GM12878 (cell line): ENCODE measurements at regions of chr7 and their contacts with region 1.

Region 1: DNA sequence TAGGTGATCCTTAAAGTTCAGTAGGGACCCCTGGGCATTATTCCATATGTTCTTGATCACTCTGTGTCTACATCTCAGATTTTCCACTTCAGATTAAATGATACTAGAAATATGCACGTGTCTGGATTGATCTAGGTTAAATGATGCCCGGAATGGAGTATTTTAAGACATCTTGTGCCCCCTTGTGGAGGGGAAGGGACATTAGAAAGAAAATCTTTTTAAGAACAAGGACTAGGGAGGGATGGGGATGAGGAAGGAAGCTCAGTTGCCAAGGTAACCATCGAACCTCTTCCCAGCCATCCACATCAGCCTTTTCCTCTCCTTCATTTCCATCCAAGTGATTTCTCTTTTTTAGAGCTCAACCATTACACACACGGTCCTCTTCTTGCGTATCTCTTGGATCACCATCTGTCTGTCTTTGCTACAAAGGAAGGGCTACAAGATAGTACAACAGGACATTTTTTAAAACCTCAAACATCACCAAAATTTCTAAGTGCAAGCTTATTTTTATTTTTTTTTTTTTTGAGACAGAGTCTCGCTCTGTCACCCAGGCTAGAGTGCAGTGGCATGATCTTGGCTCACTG is 40.5 kb downstream of the PRSS2 start:
- DNase-seq: no peak
- ATAC-seq: peak; percentile 1; the same call in 2 of the 3 replicates
- H3K4me3 ChIP-seq: no peak overlapping the region
- H3K27ac ChIP-seq: peak overlapping the region; percentile 24; the same call in 1 of the 2 replicates
- H3K4me1 ChIP-seq: peaks cover 46% of the 10 kb centered on the region
- H3K27me3 ChIP-seq: no peaks in the 10 kb centered on the region
- CTCF ChIP-seq: peak; percentile 55 to 73 (median 65)
- EP300 ChIP-seq: no peak
- POLR2A ChIP-seq: no peak
- RAD21 ChIP-seq: peak; percentile 94

Region 2: DNA sequence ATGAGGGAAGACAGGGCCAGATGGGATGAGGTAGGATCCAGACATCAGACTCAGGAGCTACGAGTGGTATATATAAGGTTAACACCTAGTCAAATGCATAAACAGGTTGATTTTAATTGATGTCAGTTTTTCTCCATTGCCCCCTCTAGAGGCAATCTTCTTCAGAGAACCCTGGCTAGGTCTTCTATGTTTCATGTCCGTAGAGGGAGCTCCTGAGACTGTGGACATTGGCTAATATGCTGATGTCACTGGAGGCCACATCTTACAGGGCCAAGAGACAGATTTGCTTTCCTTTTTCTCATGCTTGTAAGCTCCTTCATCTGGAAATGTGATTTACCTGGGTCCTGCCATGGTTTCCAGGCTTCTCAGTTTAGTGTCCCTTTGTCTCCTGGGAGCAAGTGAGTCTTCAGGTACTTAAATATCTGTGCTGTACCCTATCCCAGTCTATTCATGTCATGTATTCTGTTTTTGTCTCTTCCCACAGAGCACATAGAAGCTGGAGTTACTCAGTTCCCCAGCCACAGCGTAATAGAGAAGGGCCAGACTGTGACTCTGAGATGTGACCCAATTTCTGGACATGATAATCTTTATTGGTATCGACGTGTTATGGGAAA is 223.6 kb before region 1 on chr7:
- CTCF ChIA-PET with region 1: interaction called, 15 read pairs
- POLR2A ChIA-PET with region 1: no interaction called
- RAD21 ChIA-PET with region 1: interaction called, 11 read pairs
- SMC1A ChIA-PET with region 1: interaction called, 5 read pairs
- in situ Hi-C with region 1: no loop called
- intact Hi-C with region 1: no loop called
- DNase-seq: peak; percentile 15
- ATAC-seq: peak; percentile 88
- H3K4me3 ChIP-seq: no peak overlapping the region
- H3K27ac ChIP-seq: no peak overlapping the region
- H3K4me1 ChIP-seq: 0 out of 2 replicates have a peak, but pooled peaks cover 4% of the 10 kb centered on the region
- H3K27me3 ChIP-seq: no peaks in the 10 kb centered on the region
- CTCF ChIP-seq: peak; percentile 75 to 93 (median 75); a peak in 5 of 6 replicates
- EP300 ChIP-seq: no peak
- POLR2A ChIP-seq: no peak
- RAD21 ChIP-seq: peak; percentile 48

Region 3: GRCh38 chr7:142632291-142633134 is 178.7 kb before region 1 on chr7:
- CTCF ChIA-PET with region 1: interaction called, 185 read pairs
- POLR2A ChIA-PET with region 1: no interaction called
- RAD21 ChIA-PET with region 1: interaction called, 75 read pairs
- SMC1A ChIA-PET with region 1: interaction called, 68 read pairs
- in situ Hi-C with region 1: loop called (anchors 5 kb)
- intact Hi-C with region 1: loop called (anchors 1 kb)
- DNase-seq: peak; percentile 32
- ATAC-seq: peak; percentile 100
- H3K4me3 ChIP-seq: no peak overlapping the region
- H3K27ac ChIP-seq: no peak overlapping the region
- H3K4me1 ChIP-seq: no peaks in the 10 kb centered on the region
- H3K27me3 ChIP-seq: peaks cover 0 to 1% of the 10 kb centered on the region in 2 experiments; a peak in 1 of 4 replicates
- CTCF ChIP-seq: peak; percentile 73 to 86 (median 82)
- EP300 ChIP-seq: no peak
- POLR2A ChIP-seq: no peak
- RAD21 ChIP-seq: peak; percentile 81

Region 4: DNA sequence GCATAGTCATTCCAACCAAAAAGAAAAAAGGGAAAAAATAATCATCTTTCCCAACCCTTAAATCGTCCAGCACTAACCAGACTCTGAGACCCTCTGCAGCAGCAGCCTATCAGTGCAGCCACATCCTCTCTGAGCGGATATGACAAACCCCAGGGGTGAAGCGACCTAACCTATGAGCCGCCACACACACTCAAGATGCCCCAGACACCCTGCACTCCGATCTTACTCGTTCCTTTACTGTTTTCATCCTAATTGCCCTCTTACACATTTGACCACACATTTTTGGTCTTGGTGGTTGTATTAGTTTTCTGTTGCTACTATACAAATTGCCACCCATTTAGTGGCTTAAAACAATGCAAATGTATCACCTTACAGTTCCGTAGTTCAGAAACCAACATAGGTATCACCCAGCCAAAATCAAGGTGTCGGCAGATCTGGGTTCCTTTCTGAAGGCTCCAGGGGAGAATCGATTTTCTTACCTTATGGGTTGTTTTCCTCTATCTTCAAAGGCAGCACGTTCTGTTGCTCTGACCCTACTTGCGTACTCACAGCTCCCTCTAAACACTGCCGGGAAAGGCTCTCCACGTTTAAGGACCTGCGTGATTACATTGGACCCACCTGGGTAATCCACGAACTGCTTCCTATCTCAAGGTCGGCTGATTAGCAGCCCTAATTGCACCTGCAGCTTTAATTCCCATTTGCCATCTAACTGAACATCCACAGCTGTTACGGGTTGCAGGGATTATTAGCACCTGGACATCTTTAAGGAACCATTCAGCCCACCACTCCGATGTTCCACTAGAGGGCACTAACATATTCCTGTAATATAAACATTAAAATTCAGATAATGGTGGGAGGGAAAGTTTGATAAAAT is 99.3 kb before region 1 on chr7:
- CTCF ChIA-PET with region 1: interaction called, 277 read pairs
- POLR2A ChIA-PET with region 1: interaction called, 5 read pairs
- RAD21 ChIA-PET with region 1: interaction called, 113 read pairs
- SMC1A ChIA-PET with region 1: interaction called, 205 read pairs
- in situ Hi-C with region 1: no loop called
- intact Hi-C with region 1: loop called (anchors 1 kb)
- DNase-seq: no peak
- ATAC-seq: peak; percentile 77
- H3K4me3 ChIP-seq: no peak overlapping the region
- H3K27ac ChIP-seq: no peak overlapping the region
- H3K4me1 ChIP-seq: no peaks in the 10 kb centered on the region
- H3K27me3 ChIP-seq: no peaks in the 10 kb centered on the region
- CTCF ChIP-seq: peak; percentile 57 to 70 (median 59)
- EP300 ChIP-seq: no peak
- POLR2A ChIP-seq: no peak
- RAD21 ChIP-seq: peak; percentile 66

Region 5: GRCh38 chr7:142782922-142783900 is 28.0 kb before region 1 on chr7:
- CTCF ChIA-PET with region 1: interaction called, 1,055 read pairs
- POLR2A ChIA-PET with region 1: interaction called, 325 read pairs
- RAD21 ChIA-PET with region 1: interaction called, 813 read pairs
- SMC1A ChIA-PET with region 1: interaction called, 786 read pairs
- in situ Hi-C with region 1: no loop called
- intact Hi-C with region 1: loop called (anchors 1 kb)
- DNase-seq: peak; percentile 66
- ATAC-seq: peak; percentile 91
- H3K4me3 ChIP-seq: peak overlapping the region; percentile 65
- H3K27ac ChIP-seq: peak overlapping the region; percentile 45; the same call in 1 of the 2 replicates
- H3K4me1 ChIP-seq: peaks cover 9% of the 10 kb centered on the region
- H3K27me3 ChIP-seq: no peaks in the 10 kb centered on the region
- CTCF ChIP-seq: peak; percentile 91 to 100 (median 97); a peak in 5 of 6 replicates
- EP300 ChIP-seq: peak in 1 of 2 experiments; percentile 32; a peak in 1 of 4 replicates
- POLR2A ChIP-seq: no peak
- RAD21 ChIP-seq: peak; percentile 100

Region 6: DNA sequence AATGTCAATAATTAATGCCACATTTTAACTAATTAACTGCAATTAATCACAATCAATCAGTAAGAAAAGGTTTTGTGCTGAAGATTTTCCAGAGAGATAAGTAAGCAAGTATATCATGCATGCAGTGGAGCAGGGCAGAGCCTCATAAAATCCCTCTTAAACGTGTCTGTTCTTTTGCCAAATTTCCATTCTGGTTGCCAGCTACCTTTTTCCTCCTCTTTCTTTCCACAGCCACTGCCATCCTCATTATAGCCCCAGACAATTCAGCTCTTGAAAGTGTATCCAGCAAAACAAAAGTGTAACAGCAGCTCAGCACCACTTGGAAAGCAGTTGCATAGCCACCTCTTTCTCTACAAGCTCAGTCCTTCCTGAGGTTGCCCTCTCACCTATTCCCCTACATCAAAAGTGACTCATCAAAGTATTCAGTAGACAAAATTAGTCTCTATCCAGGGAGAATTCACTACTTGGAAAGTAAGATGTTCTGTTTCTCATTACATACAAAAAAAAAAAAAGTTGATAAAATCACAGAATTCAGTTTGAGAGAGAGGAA is 16.8 kb after region 1 on chr7:
- CTCF ChIA-PET with region 1: interaction called, 72 read pairs
- POLR2A ChIA-PET with region 1: interaction called, 9 read pairs
- RAD21 ChIA-PET with region 1: interaction called, 73 read pairs
- SMC1A ChIA-PET with region 1: interaction called, 62 read pairs
- in situ Hi-C with region 1: no loop called
- intact Hi-C with region 1: loop called (anchors 2 kb)
- DNase-seq: no peak
- ATAC-seq: no peak
- H3K4me3 ChIP-seq: no peak overlapping the region
- H3K27ac ChIP-seq: no peak overlapping the region
- H3K4me1 ChIP-seq: peaks cover 18% of the 10 kb centered on the region
- H3K27me3 ChIP-seq: no peaks in the 10 kb centered on the region
- CTCF ChIP-seq: no peak
- EP300 ChIP-seq: no peak
- POLR2A ChIP-seq: no peak
- RAD21 ChIP-seq: no peak

Region 7: GRCh38 chr7:142866361-142867058 is 55.3 kb after region 1 on chr7:
- CTCF ChIA-PET with region 1: interaction called, 10 read pairs
- POLR2A ChIA-PET with region 1: no interaction called
- RAD21 ChIA-PET with region 1: interaction called, 23 read pairs
- SMC1A ChIA-PET with region 1: interaction called, 10 read pairs
- in situ Hi-C with region 1: no loop called
- intact Hi-C with region 1: no loop called
- DNase-seq: no peak
- ATAC-seq: peak; percentile 68
- H3K4me3 ChIP-seq: no peak overlapping the region
- H3K27ac ChIP-seq: no peak overlapping the region
- H3K4me1 ChIP-seq: no peaks in the 10 kb centered on the region
- H3K27me3 ChIP-seq: no peaks in the 10 kb centered on the region
- CTCF ChIP-seq: peak; percentile 43 to 64 (median 60); a peak in 5 of 6 replicates
- EP300 ChIP-seq: no peak
- POLR2A ChIP-seq: no peak
- RAD21 ChIP-seq: peak; percentile 44; the same call in 1 of the 2 replicates